ENCODE measurements at regions of chr4 and their contacts with region 1.

Region 1: GRCh38 chr4:4488405-4489404 is 53.1 kb downstream of the STX18 start:
- DNase-seq: peak; percentile 35
- ATAC-seq: peak; percentile 87
- H3K4me3 Mint-ChIP-seq: no peak overlapping the region
- H3K27ac Mint-ChIP-seq: no peak overlapping the region
- H3K4me1 Mint-ChIP-seq: peaks cover 21% of the 10 kb centered on the region
- H3K27me3 Mint-ChIP-seq: no peaks in the 10 kb centered on the region
- CTCF ChIP-seq: peak; percentile 94

Region 2: DNA sequence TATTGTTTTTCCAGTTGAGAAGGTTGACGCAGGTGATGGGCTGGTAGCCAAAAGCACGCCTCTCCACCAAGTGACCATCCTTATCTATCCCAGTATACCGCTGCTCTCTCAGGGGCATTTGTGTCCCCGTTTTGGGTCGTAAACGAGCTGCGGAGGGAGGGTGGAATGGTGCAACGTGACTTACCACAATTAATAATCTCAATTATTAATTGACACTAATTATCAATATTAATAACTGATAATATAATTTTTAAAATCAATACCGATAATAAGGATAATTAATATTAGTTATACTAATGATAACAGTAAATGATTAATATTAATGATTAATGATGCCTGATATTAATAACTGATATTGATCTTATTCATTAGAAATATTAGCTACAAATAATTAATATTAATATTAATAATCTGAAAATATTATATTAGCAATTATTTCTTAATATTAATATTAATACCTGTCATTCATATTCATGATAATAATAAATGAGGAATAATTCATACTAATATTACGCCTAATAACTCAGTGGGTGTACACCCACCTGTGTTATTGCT is 318.0 kb before region 1 on chr4:
- CTCF ChIA-PET with region 1: no interaction called
- POLR2A ChIA-PET with region 1: no interaction called
- intact Hi-C with region 1: no loop called
- DNase-seq: no peak
- ATAC-seq: no peak
- H3K4me3 Mint-ChIP-seq: no peak overlapping the region
- H3K27ac Mint-ChIP-seq: no peak overlapping the region
- H3K4me1 Mint-ChIP-seq: no peaks in the 10 kb centered on the region
- H3K27me3 Mint-ChIP-seq: peaks cover 11% of the 10 kb centered on the region
- CTCF ChIP-seq: no peak

Region 3: GRCh38 chr4:4524364-4524763 is 35.7 kb after region 1 on chr4:
- CTCF ChIA-PET with region 1: interaction called, 7 read pairs
- POLR2A ChIA-PET with region 1: no interaction called
- intact Hi-C with region 1: loop called (anchors 2 kb)
- DNase-seq: no peak
- ATAC-seq: peak; percentile 100
- H3K4me3 Mint-ChIP-seq: peak overlapping the region; percentile 62
- H3K27ac Mint-ChIP-seq: peak overlapping the region; percentile 75
- H3K4me1 Mint-ChIP-seq: peaks cover 31% of the 10 kb centered on the region
- H3K27me3 Mint-ChIP-seq: no peaks in the 10 kb centered on the region
- CTCF ChIP-seq: no peak

Region 4: DNA sequence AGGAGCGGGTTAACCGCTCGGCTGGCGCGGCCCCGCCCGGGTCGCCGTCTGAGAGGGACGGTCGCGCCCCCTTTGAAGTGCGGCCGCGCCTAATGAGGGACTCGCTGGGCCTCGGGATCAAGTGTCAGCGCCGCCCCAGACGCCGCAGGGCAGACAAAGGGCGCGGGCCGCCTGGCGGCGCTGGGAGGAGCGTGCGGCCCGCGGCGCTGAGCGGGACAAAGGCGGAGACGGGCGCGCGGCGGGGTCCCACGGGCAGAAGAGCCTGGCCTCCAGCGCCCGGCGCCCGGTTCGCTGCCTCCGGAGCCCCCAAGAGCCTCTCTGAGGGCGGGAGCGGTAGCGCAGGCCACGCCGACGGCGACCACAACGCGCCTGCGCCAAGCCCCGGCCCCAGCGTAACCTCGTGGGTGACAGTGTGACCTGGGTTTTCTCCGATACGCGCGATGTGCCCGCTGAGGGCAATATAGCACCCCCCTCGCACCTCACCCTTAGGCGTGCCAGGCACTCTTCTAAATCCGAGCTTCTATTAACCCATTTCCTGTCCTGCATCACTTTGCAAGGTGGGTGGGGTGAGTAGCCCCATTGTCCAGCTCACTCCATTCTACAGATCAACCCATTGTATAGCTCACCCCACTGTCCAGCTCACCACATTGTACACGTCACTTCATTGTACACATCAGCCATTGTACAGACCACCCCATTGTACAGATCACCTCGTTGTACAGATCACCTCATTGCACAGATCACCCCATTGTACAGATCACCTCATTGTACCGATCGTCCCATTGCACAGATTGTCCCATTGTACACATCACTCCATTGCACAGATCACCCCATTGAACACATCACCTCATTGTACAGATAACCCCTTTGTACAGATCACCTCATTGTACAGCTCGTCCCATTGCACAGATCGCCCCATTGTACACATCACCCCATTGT is 86.8 kb after region 1 on chr4:
- CTCF ChIA-PET with region 1: interaction called, 5 read pairs
- POLR2A ChIA-PET with region 1: no interaction called
- intact Hi-C with region 1: loop called (anchors 1 kb)
- DNase-seq: peak; percentile 59
- ATAC-seq: peak; percentile 89
- H3K4me3 Mint-ChIP-seq: peak overlapping the region; percentile 83
- H3K27ac Mint-ChIP-seq: peak overlapping the region; percentile 54
- H3K4me1 Mint-ChIP-seq: peaks cover 13% of the 10 kb centered on the region
- H3K27me3 Mint-ChIP-seq: no peaks in the 10 kb centered on the region
- CTCF ChIP-seq: no peak

Region 5: DNA sequence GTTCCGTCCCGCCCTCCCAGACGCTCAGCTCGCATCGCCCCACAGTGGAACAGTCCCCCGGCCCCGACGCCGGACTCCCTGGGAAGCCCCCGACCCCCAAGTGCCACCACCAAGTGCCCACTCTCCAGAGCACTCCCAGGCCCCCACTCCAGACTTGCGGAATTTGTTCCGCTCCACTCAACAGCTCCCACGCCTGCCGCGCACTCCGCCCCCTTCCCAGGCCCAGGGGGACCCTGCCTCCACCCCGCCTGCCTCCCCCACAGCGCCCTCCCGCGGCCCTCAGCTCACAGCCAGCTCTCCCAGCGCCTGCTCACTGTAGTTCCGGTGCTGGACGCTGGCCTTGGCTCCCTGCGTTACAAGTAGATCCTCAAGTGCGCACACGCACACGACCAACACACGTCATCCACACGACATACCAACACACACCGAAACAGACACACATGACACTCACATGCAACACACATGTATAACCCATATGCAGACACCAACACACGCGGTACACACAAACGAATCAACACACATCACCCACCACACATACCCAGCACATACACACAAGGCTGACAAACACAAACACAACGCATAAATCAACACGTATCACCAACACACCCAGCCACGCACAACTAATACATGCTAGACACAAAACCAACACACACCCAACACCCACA is 378.8 kb after region 1 on chr4:
- CTCF ChIA-PET with region 1: no interaction called
- POLR2A ChIA-PET with region 1: no interaction called
- intact Hi-C with region 1: loop called (anchors 5 kb)
- DNase-seq: no peak
- ATAC-seq: no peak
- H3K4me3 Mint-ChIP-seq: no peak overlapping the region
- H3K27ac Mint-ChIP-seq: no peak overlapping the region
- H3K4me1 Mint-ChIP-seq: peaks cover 27% of the 10 kb centered on the region
- H3K27me3 Mint-ChIP-seq: peaks cover 65% of the 10 kb centered on the region
- CTCF ChIP-seq: no peak

Region 6: DNA sequence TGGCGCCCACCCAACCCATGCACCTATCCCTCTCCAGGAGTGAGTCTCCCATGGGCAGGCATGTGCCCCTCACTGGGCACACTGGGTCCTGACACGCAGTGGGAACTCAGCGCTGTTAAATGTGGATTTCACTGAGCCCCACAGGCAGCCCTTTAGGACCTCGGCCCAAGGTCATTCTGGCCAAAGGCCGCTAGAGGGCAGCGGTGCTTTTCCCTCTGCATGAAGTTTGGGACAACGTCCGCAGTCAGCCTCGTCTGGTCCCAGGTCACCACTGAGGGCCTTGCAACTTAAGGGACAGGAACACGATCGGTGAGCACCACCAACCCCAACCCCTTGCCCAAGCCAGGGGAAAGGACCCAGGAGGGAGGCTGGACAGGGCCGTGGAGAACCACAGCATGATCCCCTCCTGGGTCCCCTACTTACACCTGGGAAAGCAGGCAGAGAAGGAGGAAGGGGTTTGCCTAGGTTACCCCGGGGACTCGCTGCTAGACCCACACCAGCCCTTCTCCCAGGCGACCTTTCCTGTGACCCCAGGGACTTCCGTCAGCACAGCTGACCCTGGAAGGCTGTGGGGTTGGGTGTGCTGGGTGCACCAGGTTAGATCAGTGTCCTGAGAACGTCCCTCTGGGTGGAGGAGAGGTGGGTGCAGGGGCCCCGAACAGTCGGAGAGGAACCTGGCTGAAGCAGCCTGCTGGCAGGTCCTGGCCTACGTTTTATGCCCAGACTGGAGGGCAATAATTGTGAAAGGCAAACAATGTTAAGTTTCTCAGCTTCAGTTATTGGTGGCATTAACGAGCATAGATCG is 506.6 kb after region 1 on chr4:
- CTCF ChIA-PET with region 1: interaction called, 4 read pairs
- POLR2A ChIA-PET with region 1: no interaction called
- intact Hi-C with region 1: loop called (anchors 1 kb)
- DNase-seq: peak; percentile 42
- ATAC-seq: peak; percentile 52
- H3K4me3 Mint-ChIP-seq: no peak overlapping the region
- H3K27ac Mint-ChIP-seq: no peak overlapping the region
- H3K4me1 Mint-ChIP-seq: peaks cover 7% of the 10 kb centered on the region
- H3K27me3 Mint-ChIP-seq: peaks cover 14% of the 10 kb centered on the region
- CTCF ChIP-seq: peak; percentile 78

Region 7: GRCh38 chr4:5812506-5813229 is 1324.0 kb after region 1 on chr4:
- CTCF ChIA-PET with region 1: interaction called, 13 read pairs
- POLR2A ChIA-PET with region 1: no interaction called
- intact Hi-C with region 1: loop called (anchors 1 kb)
- DNase-seq: no peak
- ATAC-seq: no peak
- H3K4me3 Mint-ChIP-seq: no peak overlapping the region
- H3K27ac Mint-ChIP-seq: no peak overlapping the region
- H3K4me1 Mint-ChIP-seq: no peaks in the 10 kb centered on the region
- H3K27me3 Mint-ChIP-seq: no peaks in the 10 kb centered on the region
- CTCF ChIP-seq: no peak

Measured in activated B cell treated with CpG ODN at 0.5 μM for 24 hours (primary cell).